CD4-positive, alpha-beta memory T cell (primary cell): ENCODE measurements at regions of chrX and their contacts with region 1.

Region 1: GRCh38 chrX:72126539-72127140 is 5.1 kb downstream of the RTL5 start:
- DNase-seq: peak; percentile 75 to 82 (median 79)
- H3K4me3 ChIP-seq: no peak overlapping the region
- H3K4me3 Mint-ChIP-seq: peak overlapping the region in 4 of 8 donors; percentile 10 to 52 (median 45)
- H3K27ac ChIP-seq: no peak overlapping the region
- H3K27ac Mint-ChIP-seq: peak overlapping the region; percentile 68 to 85 (median 77)
- H3K4me1 ChIP-seq: peaks cover 55% of the 10 kb centered on the region
- H3K4me1 Mint-ChIP-seq: peaks cover 33 to 71% (median 49%) of the 10 kb centered on the region in 4 donors
- H3K27me3 ChIP-seq: no peaks in the 10 kb centered on the region
- H3K27me3 Mint-ChIP-seq: peaks cover 0 to 1% of the 10 kb centered on the region in 2 donors

Region 2: GRCh38 chrX:71998836-71999509 is 127.7 kb before region 1 on chrX:
- CTCF ChIA-PET with region 1: interaction called, 88 read pairs
- POLR2A ChIA-PET with region 1: interaction called, 10 read pairs
- intact Hi-C with region 1: loop called (anchors 1 kb)
- DNase-seq: peak; percentile 34 to 50 (median 41)
- H3K4me3 ChIP-seq: no peak overlapping the region
- H3K4me3 Mint-ChIP-seq: no peak overlapping the region
- H3K27ac ChIP-seq: no peak overlapping the region
- H3K27ac Mint-ChIP-seq: peak overlapping the region in 1 of 7 donors; percentile 63
- H3K4me1 ChIP-seq: peaks cover 3% of the 10 kb centered on the region
- H3K4me1 Mint-ChIP-seq: peaks cover 2 to 14% (median 3%) of the 10 kb centered on the region in 4 donors
- H3K27me3 ChIP-seq: no peaks in the 10 kb centered on the region
- H3K27me3 Mint-ChIP-seq: no peaks in the 10 kb centered on the region

Region 3: DNA sequence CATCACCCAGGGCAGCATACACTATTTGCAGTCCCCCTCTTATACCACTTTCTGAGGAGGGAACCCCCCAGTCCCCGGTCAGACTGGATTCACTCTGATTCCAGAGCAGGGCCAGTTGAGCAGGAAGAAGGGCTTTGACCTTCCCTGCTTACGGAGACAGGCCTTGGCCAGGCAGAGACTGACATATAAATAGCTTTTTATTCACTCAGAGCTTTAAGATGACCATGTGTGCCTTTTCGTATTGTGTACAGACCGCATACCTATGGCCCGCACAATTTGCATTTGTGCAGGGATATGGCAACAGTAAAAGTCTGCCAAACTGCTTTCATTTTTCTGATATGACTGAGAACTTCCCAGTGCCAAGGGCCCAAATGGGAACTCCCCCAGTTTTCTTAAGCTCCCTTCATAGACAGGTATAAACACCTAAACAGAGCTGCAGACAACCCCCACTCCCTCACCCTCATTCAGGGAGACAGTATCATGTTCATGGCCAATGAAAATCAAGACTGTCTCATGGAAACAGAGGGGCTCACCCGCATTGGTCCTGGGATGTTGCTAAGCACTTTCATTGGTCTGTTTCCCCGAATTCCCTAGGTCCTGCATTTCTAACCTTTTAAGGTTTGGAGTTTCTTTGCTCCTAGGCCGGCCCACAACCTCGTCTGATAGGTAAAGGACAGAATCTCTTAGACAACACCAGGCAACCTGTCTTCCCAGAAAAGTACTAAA is 80.9 kb before region 1 on chrX:
- CTCF ChIA-PET with region 1: interaction called, 5 read pairs
- POLR2A ChIA-PET with region 1: interaction called, 4 read pairs
- intact Hi-C with region 1: loop called (anchors 1 kb)
- DNase-seq: no peak
- H3K4me3 ChIP-seq: no peak overlapping the region
- H3K4me3 Mint-ChIP-seq: peak overlapping the region; percentile 28 to 86 (median 56)
- H3K27ac ChIP-seq: no peak overlapping the region
- H3K27ac Mint-ChIP-seq: peak overlapping the region in 6 of 7 donors; percentile 21 to 95 (median 72)
- H3K4me1 ChIP-seq: peaks cover 60% of the 10 kb centered on the region
- H3K4me1 Mint-ChIP-seq: peaks cover 35 to 82% (median 57%) of the 10 kb centered on the region in 4 donors
- H3K27me3 ChIP-seq: no peaks in the 10 kb centered on the region
- H3K27me3 Mint-ChIP-seq: no peaks in the 10 kb centered on the region

Region 4: GRCh38 chrX:72100824-72101351 is 25.8 kb before region 1 on chrX:
- CTCF ChIA-PET with region 1: interaction called, 11 read pairs
- POLR2A ChIA-PET with region 1: interaction called, 116 read pairs
- intact Hi-C with region 1: loop called (anchors 1 kb)
- DNase-seq: peak; percentile 85 to 89 (median 88)
- H3K4me3 ChIP-seq: peak overlapping the region; percentile 40 to 42
- H3K4me3 Mint-ChIP-seq: peak overlapping the region; percentile 91 to 97 (median 96)
- H3K27ac ChIP-seq: peak overlapping the region; percentile 71
- H3K27ac Mint-ChIP-seq: peak overlapping the region; percentile 92 to 99 (median 98)
- H3K4me1 ChIP-seq: peaks cover 75% of the 10 kb centered on the region
- H3K4me1 Mint-ChIP-seq: peaks cover 42 to 79% (median 62%) of the 10 kb centered on the region in 4 donors
- H3K27me3 ChIP-seq: no peaks in the 10 kb centered on the region
- H3K27me3 Mint-ChIP-seq: no peaks in the 10 kb centered on the region

Region 5: DNA sequence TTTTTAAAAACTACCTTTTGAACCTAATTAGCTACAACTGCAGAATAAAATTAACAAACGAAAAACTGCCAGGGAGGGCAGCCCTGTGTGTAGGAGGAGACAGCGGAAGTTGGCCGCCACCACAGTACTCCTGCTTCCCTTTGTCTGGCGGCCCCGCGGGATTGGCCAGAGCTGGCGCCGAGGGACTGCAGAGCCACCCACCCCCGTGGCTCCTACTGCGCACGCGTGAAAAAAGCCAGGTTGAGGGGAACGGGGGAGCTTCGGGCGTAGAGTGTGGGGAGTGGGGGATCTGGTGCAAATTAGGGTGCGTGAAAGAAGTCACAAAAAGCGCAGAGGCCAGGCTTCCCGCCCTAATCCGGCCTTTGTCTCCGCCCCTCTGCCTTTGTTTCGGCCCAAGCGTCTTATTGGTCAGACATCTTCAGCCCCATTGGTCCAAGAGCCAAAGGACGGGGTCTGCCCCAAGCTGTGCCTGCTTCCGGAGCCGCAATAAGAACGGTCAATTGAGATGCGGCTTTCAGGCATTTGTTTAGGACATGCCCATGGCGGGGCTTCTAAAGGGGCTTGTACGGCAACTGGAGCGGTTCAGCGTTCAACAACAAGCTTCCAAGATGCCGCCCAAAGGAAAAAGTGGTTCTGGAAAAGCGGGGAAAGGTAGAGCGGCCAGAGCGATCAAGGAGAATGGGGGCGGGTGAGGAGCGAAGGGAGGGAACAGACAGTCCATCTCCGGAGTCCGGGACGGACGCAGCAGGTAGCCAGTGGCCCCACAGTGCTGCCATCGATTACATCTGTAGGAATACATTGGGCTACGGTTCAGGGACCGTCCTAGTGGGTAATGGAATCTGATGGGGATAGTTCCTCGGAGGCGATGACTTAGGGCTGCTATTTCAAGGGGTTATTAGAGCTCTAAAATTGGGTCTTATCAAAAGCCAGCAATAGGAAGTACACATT is 54.8 kb after region 1 on chrX and contains the start of gene PIN4:
- CTCF ChIA-PET with region 1: interaction called, 4 read pairs
- POLR2A ChIA-PET with region 1: interaction called, 20 read pairs
- intact Hi-C with region 1: loop called (anchors 5 kb)
- DNase-seq: peak; percentile 82 to 87 (median 84)
- H3K4me3 ChIP-seq: peak within 1 kb of the TSS; percentile 69
- H3K4me3 Mint-ChIP-seq: peak within 1 kb of the TSS in 1 of 8 donors; percentile 17
- H3K27ac ChIP-seq: peak within 1 kb of the TSS; percentile 68
- H3K27ac Mint-ChIP-seq: no peak within 1 kb of the TSS
- H3K4me1 ChIP-seq: peaks cover 24% of the 10 kb centered on the region
- H3K4me1 Mint-ChIP-seq: peaks cover 6 to 13% (median 8%) of the 10 kb centered on the region in 4 donors
- H3K27me3 ChIP-seq: no peaks in the 10 kb centered on the region
- H3K27me3 Mint-ChIP-seq: no peaks in the 10 kb centered on the region
- total RNA-seq, gene PIN4: 13.3 to 13.5 TPM

Region 6: DNA sequence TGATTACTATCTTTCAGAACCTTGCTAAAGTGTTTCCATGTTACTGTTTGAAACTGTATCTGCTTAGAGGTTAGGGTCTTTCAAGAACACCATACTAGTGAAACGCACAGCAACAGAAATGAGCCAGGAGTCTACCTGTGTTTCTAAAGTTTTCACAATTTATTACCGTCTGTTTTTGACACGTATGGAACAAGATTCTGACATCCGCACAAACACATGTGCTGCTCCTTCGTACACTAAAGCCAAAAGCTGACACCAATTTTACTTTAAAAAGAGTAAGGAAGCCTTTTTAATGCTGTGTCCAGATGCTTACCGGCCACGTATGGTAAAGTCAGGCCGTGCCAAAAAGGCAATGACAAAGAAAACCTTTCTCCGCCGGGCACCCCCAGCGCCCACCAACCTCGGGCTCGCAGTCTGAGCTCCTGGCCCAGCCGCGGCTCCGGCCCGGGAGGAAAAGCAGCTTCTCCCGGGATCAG is 149.9 kb after region 1 on chrX:
- CTCF ChIA-PET with region 1: no interaction called
- POLR2A ChIA-PET with region 1: interaction called, 10 read pairs
- intact Hi-C with region 1: loop called (anchors 10 kb)
- DNase-seq: peak in 1 of 5 donors; percentile 35
- H3K4me3 ChIP-seq: peak overlapping the region; percentile 70 to 82
- H3K4me3 Mint-ChIP-seq: peak overlapping the region; percentile 90 to 96 (median 94)
- H3K27ac ChIP-seq: peak overlapping the region; percentile 89
- H3K27ac Mint-ChIP-seq: peak overlapping the region; percentile 81 to 96 (median 87)
- H3K4me1 ChIP-seq: peaks cover 39% of the 10 kb centered on the region
- H3K4me1 Mint-ChIP-seq: peaks cover 23 to 44% (median 37%) of the 10 kb centered on the region in 4 donors
- H3K27me3 ChIP-seq: no peaks in the 10 kb centered on the region
- H3K27me3 Mint-ChIP-seq: no peaks in the 10 kb centered on the region